ENCODE measurements at regions of chr3 and their contacts with region 1.

Region 1: DNA sequence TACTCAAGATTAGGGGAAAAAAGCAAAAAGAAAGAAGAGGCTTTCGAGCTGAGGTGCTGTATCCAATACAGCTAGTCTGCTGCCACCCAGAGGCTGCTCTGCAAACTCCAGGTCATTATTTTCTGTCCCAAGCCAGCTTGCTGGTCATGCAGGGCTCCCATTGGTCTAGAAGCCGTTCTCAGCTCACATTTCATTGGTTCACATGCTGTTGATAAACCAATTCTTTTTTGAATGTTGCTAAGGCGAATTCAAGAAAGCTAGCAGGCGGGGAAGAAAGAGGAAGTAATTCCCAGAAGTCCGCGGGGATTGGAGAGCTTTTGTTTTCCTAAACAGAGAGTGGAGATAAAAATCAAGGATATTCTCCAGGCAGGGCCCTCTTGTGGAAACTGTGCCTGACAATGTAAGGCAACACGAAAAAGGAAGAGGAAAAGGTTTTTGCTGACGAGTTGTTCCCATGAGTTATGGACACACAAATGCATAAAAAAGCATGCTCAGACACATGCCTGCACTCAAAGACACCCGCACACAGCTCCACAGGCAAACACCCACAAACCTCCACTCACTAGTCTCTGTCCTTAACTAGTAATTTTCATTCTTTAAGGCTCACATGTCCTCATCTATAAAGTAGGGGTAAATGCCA is 33.4 kb downstream of the FSTL1 start:
- DNase-seq: peak; percentile 85 to 98 (median 90)
- ATAC-seq: peak; percentile 97
- H3K4me3 ChIP-seq: no peak overlapping the region
- H3K4me1 ChIP-seq: peaks cover 7% of the 10 kb centered on the region
- CTCF ChIP-seq: peak; percentile 94

Region 2: GRCh38 chr3:120239644-120240043 is 177.7 kb before region 1 on chr3:
- intact Hi-C with region 1: loop called (anchors 5 to 10 kb)
- DNase-seq: no peak
- ATAC-seq: no peak
- H3K4me3 ChIP-seq: no peak overlapping the region
- H3K4me1 ChIP-seq: no peaks in the 10 kb centered on the region
- CTCF ChIP-seq: no peak

Region 3: GRCh38 chr3:120245386-120245785 is 172.0 kb before region 1 on chr3:
- intact Hi-C with region 1: loop called (anchors 5 to 10 kb)
- DNase-seq: no peak
- ATAC-seq: no peak
- H3K4me3 ChIP-seq: no peak overlapping the region
- H3K4me1 ChIP-seq: no peaks in the 10 kb centered on the region
- CTCF ChIP-seq: no peak

Region 4: DNA sequence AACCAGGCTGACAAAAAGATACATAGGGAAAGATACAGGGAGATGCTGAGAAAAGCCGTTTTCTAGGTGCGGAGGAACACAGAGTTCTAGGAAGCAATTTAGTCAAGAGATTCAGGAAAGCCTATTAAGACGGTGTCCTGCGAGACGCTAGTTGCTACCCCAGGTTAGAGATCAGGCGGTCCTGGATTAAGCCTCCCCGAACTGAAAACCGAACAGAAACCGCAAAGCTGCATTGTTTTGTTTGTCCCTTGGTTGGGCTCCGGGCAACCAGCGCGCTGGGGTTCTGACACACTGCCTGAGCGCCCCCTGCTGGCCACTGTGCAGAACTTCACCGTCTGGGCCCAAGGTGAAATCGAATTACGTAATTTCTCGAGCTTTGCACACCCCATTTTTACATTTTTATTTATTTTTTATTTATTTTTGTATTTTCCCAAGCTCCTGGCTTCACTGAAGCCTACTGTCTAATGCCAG is 141.4 kb after region 1 on chr3:
- intact Hi-C with region 1: loop called (anchors 5 to 10 kb)
- DNase-seq: peak; percentile 84 to 86 (median 86)
- ATAC-seq: peak; percentile 95
- H3K4me3 ChIP-seq: no peak overlapping the region
- H3K4me1 ChIP-seq: no peaks in the 10 kb centered on the region
- CTCF ChIP-seq: peak; percentile 99

Measured in mucosa of descending colon (tissue), 3 donors.